ENCODE measurements at regions of chr3 and their contacts with region 1.

Region 1: DNA sequence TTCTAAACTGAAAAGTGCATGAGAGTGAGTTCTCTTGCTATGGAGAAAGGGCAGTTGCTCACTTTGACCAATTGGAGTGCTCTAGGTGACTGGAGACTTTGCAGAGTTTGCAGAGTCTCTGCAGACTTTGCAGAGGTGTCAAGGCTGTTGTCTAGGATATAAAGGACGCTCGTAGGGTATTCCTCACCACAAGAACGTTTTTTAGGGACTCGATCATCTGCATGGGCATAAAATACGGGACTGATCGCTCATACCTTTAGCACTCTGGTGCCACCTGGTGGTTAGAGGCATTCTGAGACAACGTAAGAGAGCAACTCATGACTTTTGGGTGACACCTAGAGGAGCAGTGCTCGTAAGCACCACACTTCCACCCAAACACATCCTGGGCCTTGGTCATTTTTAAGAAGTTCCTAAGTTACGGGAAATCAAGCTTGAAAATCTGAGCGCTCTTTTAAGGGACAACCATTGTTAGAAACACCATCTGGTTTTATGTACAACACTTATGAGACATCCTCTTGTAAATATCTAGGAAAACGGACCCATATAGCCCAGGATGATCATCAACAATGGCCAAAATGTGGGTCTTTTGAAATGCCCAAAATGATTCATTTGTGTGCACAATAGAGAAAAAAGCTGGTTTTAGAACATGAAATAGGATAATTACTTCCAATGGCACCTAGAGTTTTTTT is 51.6 kb upstream of the XCR1 start:
- H3K4me3 ChIP-seq: no peak overlapping the region
- H3K27ac ChIP-seq: no peak overlapping the region
- H3K4me1 ChIP-seq: no peaks in the 10 kb centered on the region
- CTCF ChIP-seq: peak; percentile 93

Region 2: GRCh38 chr3:45507820-45508317 is 571.0 kb before region 1 on chr3:
- CTCF ChIA-PET with region 1: interaction called, 13 read pairs
- POLR2A ChIA-PET with region 1: no interaction called
- H3K4me3 ChIP-seq: no peak overlapping the region
- H3K27ac ChIP-seq: no peak overlapping the region
- H3K4me1 ChIP-seq: peaks cover 3% of the 10 kb centered on the region; the same call in 1 of the 2 replicates
- CTCF ChIP-seq: peak; percentile 37; the same call in 1 of the 2 replicates

Region 3: GRCh38 chr3:45736707-45737106 is 342.1 kb before region 1 on chr3:
- CTCF ChIA-PET with region 1: no interaction called
- POLR2A ChIA-PET with region 1: no interaction called
- H3K4me3 ChIP-seq: no peak overlapping the region
- H3K27ac ChIP-seq: no peak overlapping the region
- H3K4me1 ChIP-seq: no peaks in the 10 kb centered on the region
- CTCF ChIP-seq: no peak

Region 4: DNA sequence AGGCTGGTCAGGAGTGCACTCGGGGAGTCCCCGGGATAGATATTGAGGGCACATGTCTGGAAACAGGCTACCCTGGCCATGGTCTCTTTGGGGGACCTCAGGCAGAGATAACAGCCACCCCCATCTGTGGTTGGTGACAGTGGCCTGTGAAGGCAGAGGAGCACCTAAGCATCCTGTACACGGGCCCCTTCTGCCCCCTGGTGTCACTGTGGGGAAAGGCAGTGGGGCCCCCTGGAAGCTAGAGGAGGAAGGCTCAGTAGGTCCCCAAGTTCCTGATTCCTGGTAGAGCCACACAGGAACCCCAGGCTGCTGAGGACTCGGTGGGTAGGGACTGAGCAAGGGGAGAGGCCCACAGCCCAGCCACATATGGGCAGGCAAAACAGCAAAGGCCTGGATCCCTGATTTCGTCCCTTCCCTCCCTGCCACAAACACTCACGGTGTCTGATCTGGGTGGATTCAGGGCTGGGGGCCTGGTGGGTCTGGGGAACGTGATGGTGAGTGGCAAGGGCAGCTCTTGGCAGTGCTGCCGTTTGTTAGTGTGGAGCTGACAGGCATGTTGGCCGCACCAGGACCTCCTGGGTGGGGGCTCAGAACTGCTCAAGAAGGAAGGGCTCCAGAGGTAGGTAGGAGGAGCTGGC is 149.7 kb before region 1 on chr3:
- CTCF ChIA-PET with region 1: interaction called, 13 read pairs
- POLR2A ChIA-PET with region 1: no interaction called
- H3K4me3 ChIP-seq: no peak overlapping the region
- H3K27ac ChIP-seq: no peak overlapping the region
- H3K4me1 ChIP-seq: no peaks in the 10 kb centered on the region
- CTCF ChIP-seq: peak; percentile 55

Region 5: DNA sequence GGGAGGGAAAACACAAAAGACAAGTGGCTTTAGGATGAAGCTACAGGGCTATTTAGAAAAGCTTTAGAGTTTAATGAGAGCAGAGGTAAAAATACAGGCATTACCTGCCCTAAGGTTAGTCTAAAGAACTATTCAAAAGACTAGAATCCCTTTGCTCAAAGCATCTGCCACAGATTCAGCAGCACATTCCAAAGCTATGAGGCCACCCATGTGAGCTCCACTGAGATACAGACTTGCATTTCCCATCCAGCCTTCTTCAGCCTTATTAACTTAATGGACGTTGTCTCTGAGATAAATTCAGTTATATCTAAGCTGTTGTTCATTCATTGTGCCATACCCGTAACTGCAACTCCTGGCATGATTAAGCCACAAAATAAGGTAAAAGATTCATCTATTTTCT is 110.2 kb before region 1 on chr3:
- CTCF ChIA-PET with region 1: interaction called, 11 read pairs
- POLR2A ChIA-PET with region 1: no interaction called
- H3K4me3 ChIP-seq: no peak overlapping the region
- H3K27ac ChIP-seq: no peak overlapping the region
- H3K4me1 ChIP-seq: no peaks in the 10 kb centered on the region
- CTCF ChIP-seq: no peak

Region 6: GRCh38 chr3:46017720-46018119 is 61.1 kb before region 1 on chr3:
- CTCF ChIA-PET with region 1: no interaction called
- POLR2A ChIA-PET with region 1: no interaction called
- H3K4me3 ChIP-seq: no peak overlapping the region
- H3K27ac ChIP-seq: no peak overlapping the region
- H3K4me1 ChIP-seq: no peaks in the 10 kb centered on the region
- CTCF ChIP-seq: no peak

Region 7: GRCh38 chr3:46089237-46090011 is 10.6 kb after region 1 on chr3:
- CTCF ChIA-PET with region 1: interaction called, 10 read pairs
- POLR2A ChIA-PET with region 1: no interaction called
- H3K4me3 ChIP-seq: no peak overlapping the region
- H3K27ac ChIP-seq: no peak overlapping the region
- H3K4me1 ChIP-seq: no peaks in the 10 kb centered on the region
- CTCF ChIP-seq: no peak

Region 8: DNA sequence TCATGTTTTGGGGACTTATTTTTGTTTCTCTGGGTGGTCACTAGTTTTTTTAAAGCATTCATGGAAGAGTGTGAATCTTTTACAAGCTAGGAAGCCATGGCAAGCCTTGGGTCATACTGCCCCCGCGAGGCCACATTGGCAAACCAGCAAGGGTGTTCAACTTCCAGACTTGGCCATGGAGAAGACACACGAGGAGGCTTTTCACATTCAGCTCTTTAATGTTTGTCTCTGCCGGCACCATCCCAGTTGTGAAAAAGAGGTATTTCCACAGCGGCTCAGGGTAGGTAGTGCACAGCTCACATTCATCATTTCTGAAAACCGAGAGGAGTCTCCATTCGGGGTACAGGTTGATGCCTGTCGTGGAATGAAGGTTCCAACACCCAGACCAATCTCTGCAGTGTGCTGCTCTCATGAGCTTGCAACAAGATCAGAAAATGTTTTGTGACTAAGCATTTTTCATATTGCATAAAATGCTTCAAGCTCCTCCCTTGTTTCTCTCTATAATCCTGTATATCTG is 299.6 kb after region 1 on chr3:
- CTCF ChIA-PET with region 1: interaction called, 22 read pairs
- POLR2A ChIA-PET with region 1: no interaction called
- H3K4me3 ChIP-seq: no peak overlapping the region
- H3K27ac ChIP-seq: no peak overlapping the region
- H3K4me1 ChIP-seq: no peaks in the 10 kb centered on the region
- CTCF ChIP-seq: no peak

Region 9: DNA sequence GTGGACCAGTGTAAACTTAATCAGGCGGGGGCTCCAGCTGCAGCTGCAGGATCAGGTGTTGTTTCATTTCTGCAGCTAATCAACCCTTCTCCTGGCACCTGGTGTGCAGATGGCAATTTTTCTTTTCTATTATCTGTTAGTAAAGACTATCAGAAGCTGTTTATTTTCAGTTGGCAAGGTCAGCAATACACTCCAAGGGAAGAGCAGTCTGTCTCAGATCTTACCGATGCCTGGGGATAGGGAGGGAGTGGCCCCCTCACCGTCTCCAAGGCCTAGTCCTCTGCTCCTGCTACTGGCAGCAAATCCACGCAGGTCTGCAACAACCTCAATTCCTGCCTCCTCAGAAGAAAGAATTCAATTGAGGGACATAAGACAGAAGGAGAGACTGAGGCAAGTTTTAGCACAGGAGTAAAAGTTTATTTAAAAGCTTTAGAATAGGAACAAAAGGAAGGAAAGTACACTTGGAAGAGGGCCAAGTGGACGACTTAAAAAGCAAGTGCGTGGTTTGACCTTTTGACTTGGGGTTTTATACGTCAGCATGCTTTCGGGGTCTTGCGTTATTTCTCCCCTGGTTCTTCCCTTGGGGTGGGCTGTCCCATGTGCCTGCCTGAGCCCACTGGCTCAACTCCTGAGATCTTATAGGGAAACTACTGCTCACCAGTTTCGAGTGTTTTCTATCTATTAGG is 337.4 kb after region 1 on chr3:
- CTCF ChIA-PET with region 1: no interaction called
- POLR2A ChIA-PET with region 1: no interaction called
- H3K4me3 ChIP-seq: no peak overlapping the region
- H3K27ac ChIP-seq: no peak overlapping the region
- H3K4me1 ChIP-seq: no peaks in the 10 kb centered on the region
- CTCF ChIP-seq: no peak

Region 10: DNA sequence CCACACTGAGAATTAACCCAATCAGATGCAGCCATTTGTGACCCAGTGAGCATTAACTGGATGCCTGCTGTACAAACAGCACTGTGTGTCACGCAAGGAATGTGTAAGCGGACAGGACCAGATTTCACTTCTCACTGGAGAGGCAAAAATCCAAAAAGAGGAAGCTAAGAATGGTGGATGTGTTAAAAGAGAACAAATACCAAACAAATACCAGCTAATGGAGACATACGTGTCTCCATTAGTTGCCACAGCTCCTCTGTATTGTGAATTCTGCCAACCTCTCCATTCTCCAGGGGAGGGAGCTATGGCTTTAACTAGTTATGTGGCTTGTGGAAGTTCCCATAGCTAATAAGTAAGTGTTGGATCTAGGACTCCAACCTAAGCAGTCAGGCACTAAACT is 383.3 kb after region 1 on chr3:
- CTCF ChIA-PET with region 1: no interaction called
- POLR2A ChIA-PET with region 1: no interaction called
- H3K4me3 ChIP-seq: no peak overlapping the region
- H3K27ac ChIP-seq: no peak overlapping the region
- H3K4me1 ChIP-seq: no peaks in the 10 kb centered on the region
- CTCF ChIP-seq: no peak

Measured in HEK293 (cell line).